Panc1 (cell line): ENCODE measurements at regions of chr14 and their contacts with region 1.

Region 1: GRCh38 chr14:35458442-35458841 is 53.9 kb upstream of the NFKBIA start:
- DNase-seq: no peak
- ATAC-seq: no peak
- H3K4me3 ChIP-seq: no peak overlapping the region
- H3K27ac ChIP-seq: no peak overlapping the region
- H3K4me1 ChIP-seq: no peaks in the 10 kb centered on the region
- H3K27me3 ChIP-seq: no peaks in the 10 kb centered on the region
- CTCF ChIP-seq: no peak

Region 2: GRCh38 chr14:35292051-35292769 is 166.2 kb before region 1 on chr14 and contains the start of gene PSMA6:
- CTCF ChIA-PET with region 1: no interaction called
- POLR2A ChIA-PET with region 1: no interaction called
- in situ Hi-C with region 1: no loop called
- intact Hi-C with region 1: no loop called
- DNase-seq: peak; percentile 95
- ATAC-seq: peak; percentile 95
- H3K4me3 ChIP-seq: peak within 1 kb of the TSS; percentile 81 to 90
- H3K27ac ChIP-seq: peak within 1 kb of the TSS; percentile 95
- H3K4me1 ChIP-seq: peaks cover 3% of the 10 kb centered on the region; the same call in 1 of the 2 replicates
- H3K27me3 ChIP-seq: no peaks in the 10 kb centered on the region
- CTCF ChIP-seq: no peak
- total RNA-seq, gene PSMA6: 197 TPM

Region 3: GRCh38 chr14:35341446-35342159 is 116.8 kb before region 1 on chr14:
- CTCF ChIA-PET with region 1: no interaction called
- POLR2A ChIA-PET with region 1: interaction called, 10 read pairs
- in situ Hi-C with region 1: no loop called
- intact Hi-C with region 1: no loop called
- DNase-seq: no peak
- ATAC-seq: peak; percentile 95
- H3K4me3 ChIP-seq: peak overlapping the region in 1 of 2 experiments; percentile 16; a peak in 1 of 4 replicates
- H3K27ac ChIP-seq: peak overlapping the region; percentile 84
- H3K4me1 ChIP-seq: peaks cover 42% of the 10 kb centered on the region
- H3K27me3 ChIP-seq: no peaks in the 10 kb centered on the region
- CTCF ChIP-seq: no peak

Region 4: GRCh38 chr14:35385042-35385839 is 73.2 kb before region 1 on chr14:
- CTCF ChIA-PET with region 1: no interaction called
- POLR2A ChIA-PET with region 1: no interaction called
- in situ Hi-C with region 1: no loop called
- intact Hi-C with region 1: no loop called
- DNase-seq: no peak
- ATAC-seq: peak; percentile 83
- H3K4me3 ChIP-seq: no peak overlapping the region
- H3K27ac ChIP-seq: peak overlapping the region; percentile 65; the same call in 1 of the 2 replicates
- H3K4me1 ChIP-seq: peaks cover 20% of the 10 kb centered on the region
- H3K27me3 ChIP-seq: no peaks in the 10 kb centered on the region
- CTCF ChIP-seq: no peak

Region 5: GRCh38 chr14:35519986-35520385 is 61.5 kb after region 1 on chr14:
- CTCF ChIA-PET with region 1: no interaction called
- POLR2A ChIA-PET with region 1: no interaction called
- in situ Hi-C with region 1: no loop called
- intact Hi-C with region 1: no loop called
- DNase-seq: no peak
- ATAC-seq: no peak
- H3K4me3 ChIP-seq: no peak overlapping the region
- H3K27ac ChIP-seq: no peak overlapping the region
- H3K4me1 ChIP-seq: no peaks in the 10 kb centered on the region
- H3K27me3 ChIP-seq: no peaks in the 10 kb centered on the region; the same call in 1 of the 2 replicates
- CTCF ChIP-seq: no peak